Prostate gland (tissue), 2 donors: ENCODE measurements at regions of chr14 and their contacts with region 1.

Region 1: DNA sequence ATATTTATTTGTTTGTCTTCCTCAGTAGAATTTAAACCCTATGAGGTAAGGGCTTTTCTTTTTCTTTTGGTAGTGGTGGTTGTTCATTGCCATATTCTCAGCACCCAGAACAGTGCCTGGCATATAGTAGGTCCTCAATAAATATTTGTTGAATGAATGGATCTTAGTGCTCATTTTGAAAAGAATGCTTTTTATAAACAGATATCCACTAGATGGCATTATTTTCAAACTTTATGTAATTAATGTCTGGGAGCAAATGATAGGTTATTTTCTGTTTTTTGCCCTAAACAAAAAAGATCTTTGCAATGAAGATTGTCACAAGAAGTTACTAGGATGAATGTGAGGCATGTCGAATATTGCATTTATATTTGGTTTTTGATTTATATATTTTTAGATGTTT is 64.1 kb downstream of the RAD51B start:
- DNase-seq: no peak
- H3K4me3 ChIP-seq: no peak overlapping the region
- H3K27ac ChIP-seq: no peak overlapping the region
- H3K4me1 ChIP-seq: no peaks in the 10 kb centered on the region
- H3K27me3 ChIP-seq: no peaks in the 10 kb centered on the region
- CTCF ChIP-seq: peak in 2 of 4 experiments; percentile 40 to 52
- POLR2A ChIP-seq: no peak

Region 2: DNA sequence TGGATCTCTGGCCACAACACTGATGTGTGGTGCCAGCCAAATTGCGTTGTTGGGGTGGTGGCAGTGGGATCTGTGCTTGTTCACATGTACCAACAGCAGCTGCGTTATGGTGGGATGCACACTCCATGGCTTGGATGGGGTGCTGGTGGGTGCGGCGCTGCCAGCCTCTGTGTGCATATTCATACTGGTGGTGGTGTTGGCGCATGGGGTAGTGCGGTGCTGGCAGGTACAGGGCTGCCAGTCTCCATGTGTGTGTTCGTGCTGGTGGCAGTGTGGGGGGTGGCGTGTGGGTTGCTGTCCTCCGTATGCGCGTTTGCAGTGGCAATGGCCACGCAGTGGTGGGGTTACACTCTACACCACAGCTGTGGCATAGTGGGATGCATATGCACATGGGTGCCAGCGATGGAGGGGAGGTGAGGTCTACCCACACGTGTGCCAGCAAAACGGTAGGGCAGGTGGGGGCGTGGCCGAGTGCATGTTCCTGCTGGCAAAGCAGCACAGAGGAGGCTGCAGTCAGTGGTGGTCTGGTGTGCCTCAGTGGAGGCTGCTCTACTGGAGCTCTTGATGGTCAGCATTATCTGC is 37.6 kb before region 1 on chr14:
- intact Hi-C with region 1: no loop called
- DNase-seq: no peak
- H3K4me3 ChIP-seq: no peak overlapping the region
- H3K27ac ChIP-seq: no peak overlapping the region
- H3K4me1 ChIP-seq: no peaks in the 10 kb centered on the region
- H3K27me3 ChIP-seq: no peaks in the 10 kb centered on the region
- CTCF ChIP-seq: no peak
- POLR2A ChIP-seq: no peak

Region 3: GRCh38 chr14:68843471-68844209 is 959.9 kb after region 1 on chr14:
- intact Hi-C with region 1: loop called (anchors 5 kb)
- DNase-seq: peak; percentile 76
- H3K4me3 ChIP-seq: no peak overlapping the region
- H3K27ac ChIP-seq: no peak overlapping the region
- H3K4me1 ChIP-seq: no peaks in the 10 kb centered on the region
- H3K27me3 ChIP-seq: no peaks in the 10 kb centered on the region
- CTCF ChIP-seq: peak; percentile 61 to 82 (median 80)
- POLR2A ChIP-seq: no peak